Activated T-helper 2 cell treated with anti-CD3 and anti-CD28 coated beads, Interferon-gamma antibody, Interleukin-2, Interleukin-4, amounts not matched to agents 10 μg/mL and 5 μg/mL and 100 μg/mL, durations not matched to agents 14 hours and 24 hours and 36 hours (primary cell): ENCODE measurements at regions of chr6 and their contacts with region 1.

Region 1: GRCh38 chr6:45371924-45372573 is 5.7 kb downstream of the SUPT3H start:
- DNase-seq: no peak
- H3K4me3 Mint-ChIP-seq: no peak overlapping the region
- H3K27ac Mint-ChIP-seq: peak overlapping the region; percentile 48
- H3K4me1 Mint-ChIP-seq: peaks cover 46% of the 10 kb centered on the region
- H3K27me3 Mint-ChIP-seq: no peaks in the 10 kb centered on the region

Region 2: GRCh38 chr6:44788387-44788981 is 583.6 kb before region 1 on chr6:
- intact Hi-C with region 1: no loop called
- DNase-seq: no peak
- H3K4me3 Mint-ChIP-seq: no peak overlapping the region
- H3K27ac Mint-ChIP-seq: no peak overlapping the region
- H3K4me1 Mint-ChIP-seq: peaks cover 12% of the 10 kb centered on the region
- H3K27me3 Mint-ChIP-seq: no peaks in the 10 kb centered on the region

Region 3: GRCh38 chr6:45327956-45328522 is 44.0 kb before region 1 on chr6 and contains the start of gene RUNX2:
- intact Hi-C with region 1: loop called (anchors 5 kb)
- DNase-seq: no peak
- H3K4me3 Mint-ChIP-seq: peak within 1 kb of the TSS; percentile 59
- H3K27ac Mint-ChIP-seq: peak within 1 kb of the TSS; percentile 20
- H3K4me1 Mint-ChIP-seq: peaks cover 50% of the 10 kb centered on the region
- H3K27me3 Mint-ChIP-seq: no peaks in the 10 kb centered on the region
- total RNA-seq, gene RUNX2: 60.8 and 65.4 TPM in 2 replicates